ENCODE measurements at regions of chr4 and their contacts with region 1.

Region 1: GRCh38 chr4:78775303-78776030 is 683 bp upstream of the BMP2K start:
- DNase-seq: peak; percentile 89
- ATAC-seq: peak; percentile 91 to 92

Region 2: DNA sequence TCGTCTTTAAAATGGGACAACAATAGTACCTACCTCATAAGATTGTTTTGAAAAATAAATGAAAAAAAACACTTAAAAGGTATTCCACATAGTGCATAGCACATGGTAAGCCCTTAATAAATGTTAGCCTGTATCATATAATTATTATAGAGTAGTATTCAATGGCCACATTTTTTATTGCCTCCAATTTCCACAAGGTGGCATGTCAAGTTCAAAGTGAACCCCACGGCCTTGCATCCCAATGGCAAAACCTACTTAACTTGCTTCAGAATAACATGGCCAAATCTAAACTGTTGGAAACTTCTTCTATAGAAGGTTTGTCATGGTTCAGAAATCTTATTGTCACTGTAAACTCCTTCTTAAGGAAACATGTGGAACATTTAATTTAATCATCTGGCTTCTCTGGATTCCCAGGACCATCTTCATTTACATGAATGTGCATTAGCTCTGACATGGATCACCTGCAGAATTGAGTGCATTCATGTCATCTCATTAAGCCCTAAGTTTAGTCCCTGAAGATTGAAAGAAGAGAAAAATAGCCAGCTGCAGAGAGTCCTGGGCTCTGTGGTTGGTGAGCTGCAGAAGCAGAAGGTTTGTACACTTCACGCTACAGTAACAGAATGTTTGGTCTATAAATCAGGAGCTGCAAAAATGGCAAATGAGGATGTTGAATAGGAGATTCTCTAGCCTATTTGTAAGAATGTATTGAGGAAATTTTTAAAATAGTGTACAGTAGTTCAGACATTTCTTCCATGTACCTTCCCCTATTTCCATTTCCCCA is 162.9 kb before region 1 on chr4:
- intact Hi-C with region 1: loop called (anchors 2 to 10 kb)
- DNase-seq: no peak
- ATAC-seq: peak; percentile 76 to 81

Region 3: DNA sequence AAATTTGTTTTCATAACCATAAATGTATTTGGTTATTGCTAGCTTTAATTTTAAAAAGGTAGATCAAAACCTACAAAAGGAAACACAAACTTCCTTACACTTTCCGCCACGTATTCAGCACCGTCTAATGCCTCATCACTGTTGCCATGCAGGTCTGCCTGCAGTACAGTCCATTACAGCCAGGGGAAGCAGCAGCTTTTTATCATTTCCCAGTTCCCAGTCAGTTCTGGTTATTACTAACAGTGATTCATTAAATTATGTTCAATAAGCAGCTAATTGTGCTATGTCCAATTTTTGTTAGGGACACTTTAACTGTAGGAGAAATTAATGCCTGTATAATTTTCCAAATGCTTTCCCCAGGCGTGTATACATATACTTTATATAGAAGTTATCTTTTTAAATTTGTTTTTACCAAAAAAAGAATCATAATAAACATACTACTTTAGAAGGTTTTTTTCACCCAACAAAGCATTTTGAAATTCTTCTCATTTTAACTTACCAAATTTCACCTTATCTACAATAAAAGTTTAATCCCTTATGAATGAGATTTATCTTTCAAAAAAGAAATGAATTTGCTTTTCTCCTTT is 130.6 kb before region 1 on chr4:
- intact Hi-C with region 1: loop called in 1 of 2 experiments (anchors 10 kb)
- DNase-seq: peak; percentile 64
- ATAC-seq: peak; percentile 91

Region 4: GRCh38 chr4:78691971-78692821 is 83.3 kb before region 1 on chr4:
- intact Hi-C with region 1: loop called in 1 of 2 experiments (anchors 5 kb)
- DNase-seq: no peak
- ATAC-seq: peak; percentile 91 to 92

Measured in left cardiac atrium (tissue), 4 donors.